ENCODE measurements at regions of chr2 and their contacts with region 1.

Region 1: GRCh38 chr2:197011799-197012641 is 85.5 kb upstream of the PGAP1 start:
- DNase-seq: peak; percentile 70
- ATAC-seq: peak; percentile 85
- H3K4me3 ChIP-seq: no peak overlapping the region
- H3K27ac ChIP-seq: no peak overlapping the region
- H3K4me1 ChIP-seq: peaks cover 16% of the 10 kb centered on the region
- H3K27me3 ChIP-seq: no peaks in the 10 kb centered on the region
- CTCF ChIP-seq: peak; percentile 92

Region 2: GRCh38 chr2:196849895-196850294 is 162.1 kb before region 1 on chr2:
- CTCF ChIA-PET with region 1: no interaction called
- POLR2A ChIA-PET with region 1: no interaction called
- intact Hi-C with region 1: loop called (anchors 2 kb)
- DNase-seq: peak; percentile 50
- ATAC-seq: peak; percentile 96
- H3K4me3 ChIP-seq: no peak overlapping the region
- H3K27ac ChIP-seq: no peak overlapping the region
- H3K4me1 ChIP-seq: 0 out of 2 replicates have a peak, but pooled peaks cover 3% of the 10 kb centered on the region
- H3K27me3 ChIP-seq: no peaks in the 10 kb centered on the region
- CTCF ChIP-seq: peak; percentile 68

Region 3: GRCh38 chr2:196987649-196988364 is 24.2 kb before region 1 on chr2:
- CTCF ChIA-PET with region 1: no interaction called
- POLR2A ChIA-PET with region 1: no interaction called
- intact Hi-C with region 1: loop called (anchors 2 kb)
- DNase-seq: peak; percentile 95
- ATAC-seq: peak; percentile 96
- H3K4me3 ChIP-seq: peak overlapping the region; percentile 52
- H3K27ac ChIP-seq: peak overlapping the region; percentile 94
- H3K4me1 ChIP-seq: peaks cover 26% of the 10 kb centered on the region
- H3K27me3 ChIP-seq: no peaks in the 10 kb centered on the region
- CTCF ChIP-seq: no peak

Region 4: DNA sequence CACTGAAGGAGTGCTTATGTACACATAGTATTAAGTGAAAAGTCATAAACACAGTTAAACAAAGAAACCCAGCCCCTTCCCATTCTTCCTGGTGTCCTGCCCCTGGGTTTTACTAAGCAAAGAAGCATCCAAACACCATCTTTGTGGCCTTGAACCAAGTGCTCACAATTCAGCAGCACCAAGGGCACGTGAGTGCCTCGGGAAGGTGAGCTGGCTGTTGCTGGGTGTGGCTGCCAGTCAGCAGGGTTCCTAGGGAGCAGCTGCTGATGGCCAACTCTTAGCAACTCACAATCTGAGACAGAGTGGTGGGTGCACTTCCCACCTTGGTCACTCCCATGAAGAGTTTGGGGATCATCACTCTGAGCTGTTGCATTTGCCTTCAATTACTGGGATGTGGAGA is 12.2 kb after region 1 on chr2:
- CTCF ChIA-PET with region 1: no interaction called
- POLR2A ChIA-PET with region 1: no interaction called
- intact Hi-C with region 1: no loop called
- DNase-seq: peak; percentile 51
- ATAC-seq: peak; percentile 72
- H3K4me3 ChIP-seq: no peak overlapping the region
- H3K27ac ChIP-seq: no peak overlapping the region
- H3K4me1 ChIP-seq: peaks cover 15% of the 10 kb centered on the region
- H3K27me3 ChIP-seq: no peaks in the 10 kb centered on the region
- CTCF ChIP-seq: no peak

Region 5: DNA sequence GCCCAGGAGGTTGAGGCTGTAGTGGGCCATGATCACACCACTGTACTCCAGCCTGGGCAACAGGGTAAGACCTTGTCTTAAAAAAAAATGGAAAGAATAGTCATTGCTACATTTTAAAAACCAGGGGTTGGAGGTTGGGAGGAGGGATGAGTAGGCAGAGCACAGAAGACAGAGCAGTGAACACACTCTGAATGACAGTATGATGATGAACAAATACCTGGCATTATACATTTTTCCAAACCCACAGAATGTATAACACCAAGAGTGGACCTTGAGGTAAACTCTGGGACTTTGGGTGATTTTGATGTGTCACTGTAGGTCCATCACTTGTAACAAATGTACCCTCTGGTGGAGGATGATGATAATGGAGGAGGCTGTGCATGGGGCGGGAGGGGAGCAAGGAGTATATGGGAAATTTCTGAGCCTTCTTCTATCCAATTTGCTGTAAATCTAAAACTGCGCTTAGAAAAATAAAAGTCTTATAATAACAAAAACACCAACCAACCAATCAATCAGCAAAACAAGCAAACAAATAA is 25.9 kb after region 1 on chr2:
- CTCF ChIA-PET with region 1: no interaction called
- POLR2A ChIA-PET with region 1: no interaction called
- intact Hi-C with region 1: loop called (anchors 2 kb)
- DNase-seq: peak; percentile 48
- ATAC-seq: peak; percentile 56
- H3K4me3 ChIP-seq: no peak overlapping the region
- H3K27ac ChIP-seq: no peak overlapping the region
- H3K4me1 ChIP-seq: no peaks in the 10 kb centered on the region
- H3K27me3 ChIP-seq: no peaks in the 10 kb centered on the region
- CTCF ChIP-seq: peak; percentile 52

Region 6: DNA sequence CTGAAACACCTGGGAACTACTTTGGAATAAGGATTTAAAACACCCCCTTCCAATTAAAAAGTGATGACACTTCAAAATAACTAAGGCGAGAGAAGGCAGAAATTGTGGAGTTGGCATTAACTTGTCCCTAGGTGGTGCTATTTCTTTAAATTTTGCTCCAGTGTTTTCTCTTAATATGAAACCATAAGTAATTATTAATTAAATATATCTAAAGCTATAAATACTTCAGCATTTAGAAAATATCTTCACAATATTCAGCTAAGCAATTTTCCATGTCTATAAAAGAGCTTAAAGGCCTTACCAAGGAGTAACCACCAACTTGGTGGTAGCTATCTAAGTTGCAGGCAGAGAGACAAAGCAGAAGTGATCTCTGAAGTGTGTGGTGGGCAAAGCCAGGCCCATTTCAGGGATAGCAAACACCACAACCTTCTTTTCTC is 101.3 kb after region 1 on chr2:
- CTCF ChIA-PET with region 1: no interaction called
- POLR2A ChIA-PET with region 1: no interaction called
- intact Hi-C with region 1: loop called (anchors 1 kb)
- DNase-seq: peak; percentile 61
- ATAC-seq: peak; percentile 37; the same call in 1 of the 2 replicates
- H3K4me3 ChIP-seq: no peak overlapping the region
- H3K27ac ChIP-seq: no peak overlapping the region
- H3K4me1 ChIP-seq: peaks cover 4% of the 10 kb centered on the region; the same call in 1 of the 2 replicates
- H3K27me3 ChIP-seq: no peaks in the 10 kb centered on the region
- CTCF ChIP-seq: peak; percentile 71

Region 7: DNA sequence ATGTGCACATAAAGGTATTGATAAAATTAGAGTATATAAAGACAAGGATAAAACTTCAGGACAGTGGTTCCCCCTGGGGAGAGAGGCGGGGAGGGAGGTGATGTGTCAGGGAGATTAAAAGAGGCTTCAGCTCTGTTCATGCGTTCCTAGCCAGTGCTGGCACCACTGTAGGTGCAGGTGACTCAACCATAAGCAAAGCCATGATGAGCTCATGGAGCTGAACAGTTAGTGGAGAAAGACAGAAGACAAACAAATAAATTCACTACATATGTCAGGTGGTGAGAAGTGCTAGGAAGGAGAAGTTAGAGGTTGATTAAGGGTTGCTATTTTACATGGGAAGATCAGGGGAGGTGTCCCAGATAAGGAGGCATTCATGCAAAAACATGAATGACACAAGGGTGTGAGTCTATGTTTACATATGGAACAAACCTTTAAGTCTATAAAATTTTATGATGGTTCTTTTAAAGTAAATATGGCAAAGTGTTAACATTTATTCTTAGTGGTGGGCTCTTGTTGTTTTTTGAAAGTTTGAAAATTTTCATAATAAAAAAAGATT is 162.6 kb after region 1 on chr2:
- CTCF ChIA-PET with region 1: no interaction called
- POLR2A ChIA-PET with region 1: no interaction called
- intact Hi-C with region 1: loop called (anchors 5 kb)
- DNase-seq: peak; percentile 86
- ATAC-seq: peak; percentile 99
- H3K4me3 ChIP-seq: no peak overlapping the region
- H3K27ac ChIP-seq: no peak overlapping the region
- H3K4me1 ChIP-seq: peaks cover 25% of the 10 kb centered on the region
- H3K27me3 ChIP-seq: no peaks in the 10 kb centered on the region
- CTCF ChIP-seq: no peak

Region 8: DNA sequence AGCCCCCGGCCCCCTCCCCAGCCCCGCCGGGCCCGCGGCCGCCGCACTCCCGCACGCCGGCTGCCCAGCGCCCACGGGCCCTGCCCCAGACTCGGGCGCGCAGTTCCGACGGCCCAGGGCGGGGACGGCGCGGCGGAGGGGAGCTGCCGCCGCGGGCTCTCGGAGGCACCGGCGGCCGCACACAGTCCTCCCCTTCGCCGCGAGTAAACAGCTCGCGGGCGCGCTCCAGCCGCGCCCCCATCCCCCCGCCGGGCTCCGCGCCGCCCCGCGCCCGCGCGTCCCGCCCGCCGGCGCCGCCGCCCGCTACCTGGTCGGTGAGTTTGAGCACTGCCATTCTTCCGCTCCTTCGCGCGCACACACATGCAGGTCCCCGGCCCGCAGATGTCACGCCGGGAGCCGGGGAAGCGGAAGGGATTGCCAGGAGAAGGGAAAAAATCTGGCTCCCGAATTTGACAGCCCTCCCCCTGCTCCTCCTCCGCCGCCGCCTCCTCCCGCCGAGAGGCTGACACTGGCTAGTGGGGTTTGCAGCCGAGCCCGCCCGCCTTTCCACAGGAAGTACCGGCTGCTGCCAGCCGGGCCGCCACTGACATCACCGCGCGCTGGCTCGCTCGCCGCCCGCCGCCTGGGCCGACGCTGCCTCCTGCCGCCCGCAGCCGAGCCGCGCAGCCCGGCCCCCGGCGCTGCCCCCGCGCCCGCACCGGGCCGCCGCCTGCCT is 298.4 kb after region 1 on chr2 and contains the start of gene ANKRD44:
- CTCF ChIA-PET with region 1: no interaction called
- POLR2A ChIA-PET with region 1: no interaction called
- intact Hi-C with region 1: loop called (anchors 10 kb)
- DNase-seq: peak; percentile 80
- ATAC-seq: peak; percentile 88
- H3K4me3 ChIP-seq: peak within 1 kb of the TSS; percentile 78
- H3K27ac ChIP-seq: no peak within 1 kb of the TSS
- H3K4me1 ChIP-seq: peaks cover 32% of the 10 kb centered on the region
- H3K27me3 ChIP-seq: no peaks in the 10 kb centered on the region
- CTCF ChIP-seq: 0 out of 2 replicates have a peak, but pooled peaks have one; percentile 7
- total RNA-seq, gene ANKRD44: 2.4 and 28.7 TPM in 2 replicates

Measured in PC-3 (cell line).